A549 (cell line): ENCODE measurements at regions of chr11 and their contacts with region 1.

Region 1: DNA sequence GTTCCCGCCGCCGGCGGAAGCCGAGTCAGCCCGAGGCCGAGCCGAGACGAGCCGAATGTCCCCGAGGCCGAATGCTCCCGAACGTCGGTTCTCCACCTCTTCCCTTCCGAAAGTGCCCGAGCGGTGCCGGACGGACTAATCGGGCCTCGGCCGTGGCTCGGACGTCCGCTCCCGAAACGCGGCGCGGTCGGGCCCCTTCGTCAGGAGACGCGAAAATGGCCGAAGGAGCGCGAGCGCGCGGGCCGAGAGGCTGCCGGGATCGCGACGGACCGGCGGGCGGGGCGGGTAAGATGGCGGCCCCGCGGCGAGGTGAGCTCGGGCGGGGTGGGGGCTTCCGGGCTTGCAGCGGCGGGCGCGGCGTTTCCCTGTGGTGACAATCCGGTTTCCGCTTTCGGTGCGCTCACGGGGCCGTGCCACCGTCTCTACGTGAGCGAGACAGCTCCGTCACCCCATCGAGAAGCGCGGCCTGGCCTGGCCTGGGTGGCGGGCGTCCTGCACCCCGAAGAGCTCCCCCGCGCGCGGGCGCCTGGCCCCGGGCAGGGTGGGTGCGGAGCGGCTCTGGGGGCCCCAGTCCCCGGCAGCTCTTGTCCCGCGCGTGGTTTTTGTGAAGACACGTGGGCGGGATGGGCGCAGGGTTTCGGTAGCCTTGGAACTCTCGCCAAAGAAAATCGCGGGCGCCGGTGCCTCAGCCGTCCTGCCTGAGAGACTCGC is at the start of gene TMEM80:
- DNase-seq: peak; percentile 54 to 98
- ATAC-seq: peak; percentile 75 to 89
- H3K4me3 ChIP-seq: peak within 1 kb of the TSS; percentile 81
- H3K27ac ChIP-seq: peak within 1 kb of the TSS; percentile 95 to 98
- H3K4me1 ChIP-seq: peaks cover 42% of the 10 kb centered on the region
- CTCF ChIP-seq: no peak
- EP300 ChIP-seq: no peak
- POLR2A ChIP-seq: peak; percentile 89
- RAD21 ChIP-seq: no peak
- polyA plus RNA-seq, gene TMEM80: 15.1 and 15.2 TPM in 2 replicates

Region 2: DNA sequence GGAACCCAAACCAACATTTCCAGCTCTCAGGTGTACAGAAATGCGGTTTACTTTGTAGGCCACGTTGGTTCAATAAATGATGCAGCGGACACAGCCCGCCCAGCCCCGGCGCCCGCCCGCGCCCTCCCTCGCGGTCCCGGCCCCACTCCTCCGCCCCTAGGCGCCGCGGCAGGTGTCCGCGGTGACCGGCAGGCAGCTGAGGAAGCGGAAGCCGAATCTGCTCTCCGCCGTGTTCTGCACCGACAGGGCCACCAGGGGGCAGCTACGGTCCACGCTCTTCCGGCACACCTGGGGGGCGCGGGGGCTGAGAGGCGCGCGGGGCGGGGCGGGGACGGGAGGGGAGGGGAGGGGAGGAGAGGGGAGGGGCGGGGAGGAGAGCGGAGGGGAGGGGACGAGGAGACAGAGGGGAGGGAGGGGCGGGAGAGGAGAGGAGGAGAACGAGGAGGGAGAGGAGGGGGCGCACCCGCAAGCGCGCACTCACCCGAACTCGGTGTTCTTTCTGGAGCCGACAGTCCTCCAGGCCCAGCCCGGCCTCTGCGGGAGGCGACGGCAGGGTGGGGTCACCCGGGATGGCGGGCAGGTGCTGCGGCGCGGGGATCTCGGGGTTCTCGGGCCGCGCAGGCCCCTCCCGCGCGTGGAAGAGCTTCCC is 140.7 kb before region 1 on chr11:
- CTCF ChIA-PET with region 1: interaction called, 12 read pairs
- POLR2A ChIA-PET with region 1: interaction called, 5 read pairs
- DNase-seq: peak; percentile 69 to 81
- ATAC-seq: peak; percentile 48 to 72; a peak in 5 of 6 replicates
- H3K4me3 ChIP-seq: peak overlapping the region; percentile 67
- H3K27ac ChIP-seq: peak overlapping the region; percentile 81 to 88
- H3K4me1 ChIP-seq: peaks cover 22% of the 10 kb centered on the region
- CTCF ChIP-seq: peak; percentile 52
- EP300 ChIP-seq: no peak
- POLR2A ChIP-seq: no peak
- RAD21 ChIP-seq: peak; percentile 71 to 84

Region 3: GRCh38 chr11:655036-655726 is 40.5 kb before region 1 on chr11:
- CTCF ChIA-PET with region 1: interaction called, 10 read pairs
- POLR2A ChIA-PET with region 1: no interaction called
- DNase-seq: peak in 1 of 2 experiments; percentile 36
- ATAC-seq: peak; percentile 25 to 60; a peak in 4 of 6 replicates
- H3K4me3 ChIP-seq: no peak overlapping the region
- H3K27ac ChIP-seq: no peak overlapping the region
- H3K4me1 ChIP-seq: peaks cover 14% of the 10 kb centered on the region
- CTCF ChIP-seq: no peak
- EP300 ChIP-seq: no peak
- POLR2A ChIP-seq: no peak
- RAD21 ChIP-seq: no peak

Region 4: GRCh38 chr11:706957-707816 is 11.5 kb after region 1 on chr11:
- CTCF ChIA-PET with region 1: interaction called, 44 read pairs
- POLR2A ChIA-PET with region 1: interaction called, 41 read pairs
- DNase-seq: peak; percentile 74 to 80
- ATAC-seq: peak; percentile 41 to 73
- H3K4me3 ChIP-seq: peak overlapping the region; percentile 97
- H3K27ac ChIP-seq: peak overlapping the region; percentile 91 to 99
- H3K4me1 ChIP-seq: peaks cover 72% of the 10 kb centered on the region
- CTCF ChIP-seq: no peak
- EP300 ChIP-seq: no peak
- POLR2A ChIP-seq: peak; percentile 56
- RAD21 ChIP-seq: no peak